ENCODE measurements at regions of chr11 and their contacts with region 1.

Region 1: GRCh38 chr11:29989174-29989970 is 27.5 kb downstream of the KCNA4 start:
- DNase-seq: no peak
- ATAC-seq: no peak

Region 2: GRCh38 chr11:29914203-29914930 is 75.0 kb before region 1 on chr11:
- intact Hi-C with region 1: no loop called
- DNase-seq: no peak
- ATAC-seq: no peak

Region 3: GRCh38 chr11:30025396-30026139 is 36.2 kb after region 1 on chr11:
- intact Hi-C with region 1: no loop called
- DNase-seq: no peak
- ATAC-seq: no peak

Region 4: DNA sequence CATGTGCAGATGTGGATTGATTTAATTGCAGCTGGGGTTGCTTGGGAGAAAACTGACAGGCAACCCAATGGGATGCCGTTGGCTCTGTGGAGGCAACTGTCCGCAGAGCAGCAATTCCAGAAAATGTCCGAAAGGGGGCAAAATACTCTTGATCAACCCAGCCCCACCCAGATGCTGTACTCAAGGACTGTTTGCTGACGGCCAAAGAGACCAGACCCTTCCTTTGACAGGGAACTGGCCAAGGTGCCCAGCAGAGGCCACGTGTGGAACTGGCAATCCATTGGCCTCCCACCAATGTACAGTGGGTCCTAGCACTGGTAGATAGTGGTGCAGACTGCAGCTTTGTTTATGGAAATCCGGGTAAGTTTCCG is 57.2 kb after region 1 on chr11:
- intact Hi-C with region 1: no loop called
- DNase-seq: peak; percentile 44
- ATAC-seq: no peak

Region 5: GRCh38 chr11:30432178-30432577 is 442.8 kb after region 1 on chr11:
- intact Hi-C with region 1: loop called (anchors 10 kb)
- DNase-seq: no peak
- ATAC-seq: no peak